ENCODE measurements at regions of chr16 and their contacts with region 1.

Region 1: DNA sequence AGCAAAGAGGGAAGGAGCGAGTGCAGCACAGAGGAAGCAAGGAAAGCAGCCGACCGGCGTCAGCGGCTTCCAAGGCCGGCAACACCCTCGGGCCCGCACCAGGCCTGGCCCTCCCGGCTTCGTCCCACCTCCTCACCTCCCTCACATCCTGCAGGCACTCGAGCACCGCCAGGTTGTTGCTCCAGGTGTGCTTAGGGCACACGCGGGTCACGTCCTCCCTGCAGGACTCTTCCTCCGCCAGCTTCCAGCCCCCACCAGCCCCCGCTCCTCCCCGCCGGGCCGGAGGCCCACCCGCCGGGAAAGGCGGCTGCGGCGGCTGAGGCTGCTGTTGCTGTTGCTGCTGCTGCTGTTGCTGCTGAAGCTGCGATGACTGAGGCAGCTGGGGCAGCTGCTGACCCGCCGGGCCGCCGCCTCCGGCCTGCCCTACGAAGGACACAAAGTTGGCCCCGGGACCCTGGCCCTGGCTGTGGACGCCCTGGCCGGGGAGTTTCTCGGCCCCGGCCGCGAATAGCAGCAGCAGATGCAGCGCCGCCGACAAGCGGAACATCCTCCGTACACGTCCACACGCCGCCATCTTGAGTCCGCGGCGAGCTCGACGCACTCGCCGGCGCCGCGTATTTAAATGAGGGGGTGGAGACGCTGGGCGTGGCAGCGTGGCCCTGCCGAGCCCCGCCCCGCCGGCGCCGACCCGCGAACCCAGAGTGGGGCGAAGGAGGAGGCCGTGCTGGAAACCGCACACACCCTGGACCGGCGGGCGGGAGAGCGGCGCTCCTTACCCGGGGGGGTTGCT is at the start of gene GLG1:
- DNase-seq: peak; percentile 93
- ATAC-seq: peak; percentile 96
- H3K4me3 Mint-ChIP-seq: peak within 1 kb of the TSS; percentile 98
- H3K27ac Mint-ChIP-seq: peak within 1 kb of the TSS; percentile 91
- H3K4me1 Mint-ChIP-seq: peaks cover 48% of the 10 kb centered on the region
- H3K27me3 Mint-ChIP-seq: no peaks in the 10 kb centered on the region
- CTCF ChIP-seq: no peak
- total RNA-seq, gene GLG1: 70.0 to 74.9 TPM

Region 2: DNA sequence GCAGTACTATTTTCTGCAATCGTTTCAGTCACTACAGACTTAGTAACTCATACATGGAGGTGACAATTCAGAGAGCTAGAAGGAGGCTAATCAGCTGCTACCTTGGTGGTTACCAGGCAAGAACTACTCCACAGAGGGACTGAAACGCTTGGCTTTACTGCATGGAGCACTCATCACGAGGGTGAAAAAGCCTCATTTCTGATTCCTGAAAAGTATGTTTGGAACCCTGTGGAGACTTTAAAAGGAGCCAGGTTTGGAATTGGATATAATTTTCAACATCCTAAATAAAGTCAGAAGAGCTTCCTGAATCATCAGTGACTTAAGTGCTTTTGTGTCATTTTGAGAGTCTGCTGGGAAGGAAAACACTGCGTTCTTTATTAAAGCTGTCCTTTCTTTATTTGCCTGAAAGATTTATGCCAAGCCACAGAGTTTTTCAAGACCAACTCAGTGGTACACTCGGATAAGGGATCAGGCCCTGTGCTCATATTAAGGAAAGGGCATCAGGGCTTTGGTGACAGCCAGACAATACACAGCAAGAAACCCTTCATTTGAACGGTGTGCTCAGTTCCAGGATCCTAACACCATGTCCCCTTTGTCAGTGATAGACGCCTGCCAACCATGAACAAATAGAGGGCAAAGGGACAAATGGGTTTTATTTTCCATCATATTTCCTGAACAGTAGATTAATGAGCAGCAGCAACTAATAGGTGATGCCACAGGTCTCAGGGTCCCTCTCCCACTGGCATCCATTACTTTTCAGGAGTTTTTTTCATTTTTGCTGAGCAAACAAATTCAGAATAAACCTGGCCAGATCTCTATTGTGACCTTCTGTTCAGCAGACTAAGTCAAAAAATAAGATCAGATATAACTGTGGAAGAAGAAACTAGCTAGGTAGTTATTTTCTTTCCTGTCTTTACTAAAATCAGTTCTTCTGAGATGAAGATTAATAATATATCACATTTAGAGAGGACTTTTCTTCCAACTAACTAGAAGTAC is 104.9 kb before region 1 on chr16:
- CTCF ChIA-PET with region 1: no interaction called
- POLR2A ChIA-PET with region 1: no interaction called
- intact Hi-C with region 1: loop called (anchors 10 kb)
- DNase-seq: no peak
- ATAC-seq: no peak
- H3K4me3 Mint-ChIP-seq: no peak overlapping the region
- H3K27ac Mint-ChIP-seq: no peak overlapping the region
- H3K4me1 Mint-ChIP-seq: peaks cover 22% of the 10 kb centered on the region
- H3K27me3 Mint-ChIP-seq: no peaks in the 10 kb centered on the region
- CTCF ChIP-seq: no peak

Measured in activated CD8-positive, alpha-beta T cell treated with anti-CD3 and anti-CD28 coated beads for 36 hours (primary cell).